HAP-1 (cell line): ENCODE measurements at regions of chr12 and their contacts with region 1.

Region 1: GRCh38 chr12:108950991-108951739 is 69.7 kb downstream of the SVOP start:
- DNase-seq: peak; percentile 48 to 75
- H3K4me3 ChIP-seq: no peak overlapping the region
- H3K4me1 ChIP-seq: no peaks in the 10 kb centered on the region
- H3K27me3 ChIP-seq: peaks cover 5% of the 10 kb centered on the region; the same call in 1 of the 2 replicates

Region 2: DNA sequence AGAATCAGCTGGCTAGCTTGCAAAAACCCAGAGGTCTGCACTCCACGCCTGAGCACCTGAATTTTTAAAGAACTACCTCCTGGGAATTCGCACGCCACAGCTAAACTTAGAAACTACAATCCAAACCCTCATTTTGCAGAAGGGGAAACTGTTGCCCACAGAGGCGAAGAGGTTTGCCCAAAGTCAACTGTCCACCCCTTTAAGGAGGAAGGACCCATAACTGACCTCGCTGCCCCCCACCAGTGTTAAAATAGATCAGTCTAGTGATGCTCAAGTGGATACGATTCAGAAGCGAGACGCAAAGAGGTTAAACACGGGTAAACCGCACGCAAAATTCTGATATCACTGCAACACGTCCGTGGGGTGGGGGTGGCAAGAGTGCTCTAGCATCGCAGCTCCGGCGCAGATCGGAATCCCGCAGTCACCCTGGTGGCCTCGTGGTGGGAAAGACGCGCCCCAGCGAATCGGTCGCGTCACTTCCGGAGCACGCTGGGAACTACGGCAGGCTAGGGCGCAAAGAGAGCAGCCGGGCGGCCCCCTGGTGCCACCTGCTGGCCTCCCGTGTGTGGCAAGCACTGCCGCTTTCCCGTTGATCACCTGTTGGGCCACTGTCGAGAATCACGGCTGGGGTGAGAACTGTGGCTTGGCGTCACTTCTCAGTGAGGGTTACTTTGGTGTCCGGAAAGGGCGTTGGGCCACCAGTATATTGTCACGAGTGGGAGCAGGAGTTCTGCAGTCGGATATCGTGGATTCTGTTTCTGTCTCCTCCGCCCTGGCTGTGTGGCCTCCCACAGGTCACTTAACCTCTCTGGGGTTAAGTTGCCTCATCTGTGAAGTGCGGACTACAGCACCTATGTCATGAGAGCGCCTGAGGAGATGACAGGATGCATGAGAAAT is 142.1 kb after region 1 on chr12 and contains the start of gene ALKBH2:
- in situ Hi-C with region 1: loop called (anchors 5 kb)
- DNase-seq: peak; percentile 83 to 95
- H3K4me3 ChIP-seq: peak within 1 kb of the TSS; percentile 41
- H3K4me1 ChIP-seq: peaks cover 22% of the 10 kb centered on the region
- H3K27me3 ChIP-seq: no peaks in the 10 kb centered on the region